Gastrocnemius medialis (tissue), 4 donors: ENCODE measurements at regions of chr15 and their contacts with region 1.

Region 1: GRCh38 chr15:94324117-94324826 is 92.9 kb downstream of the MCTP2 start:
- DNase-seq: peak in 1 of 2 donors; percentile 17
- ATAC-seq: peak; percentile 77 to 96
- H3K4me3 ChIP-seq: no peak overlapping the region
- H3K27ac ChIP-seq: no peak overlapping the region
- H3K4me1 ChIP-seq: no peaks in the 10 kb centered on the region
- H3K27me3 ChIP-seq: no peaks in the 10 kb centered on the region
- CTCF ChIP-seq: peak; percentile 42 to 86 (median 69)
- POLR2A ChIP-seq: no peak

Region 2: GRCh38 chr15:93035953-93036800 is 1288.1 kb before region 1 on chr15:
- in situ Hi-C with region 1: loop called in 1 of 4 experiments (anchors 25 kb)
- intact Hi-C with region 1: loop called (anchors 5 kb)
- DNase-seq: peak in 1 of 2 donors; percentile 51
- ATAC-seq: peak; percentile 24 to 35
- H3K4me3 ChIP-seq: no peak overlapping the region
- H3K27ac ChIP-seq: peak overlapping the region in 1 of 4 donors; percentile 68
- H3K4me1 ChIP-seq: peaks cover 10 to 18% of the 10 kb centered on the region in 2 donors
- H3K27me3 ChIP-seq: no peaks in the 10 kb centered on the region
- CTCF ChIP-seq: peak; percentile 15 to 66 (median 60)
- POLR2A ChIP-seq: no peak

Region 3: DNA sequence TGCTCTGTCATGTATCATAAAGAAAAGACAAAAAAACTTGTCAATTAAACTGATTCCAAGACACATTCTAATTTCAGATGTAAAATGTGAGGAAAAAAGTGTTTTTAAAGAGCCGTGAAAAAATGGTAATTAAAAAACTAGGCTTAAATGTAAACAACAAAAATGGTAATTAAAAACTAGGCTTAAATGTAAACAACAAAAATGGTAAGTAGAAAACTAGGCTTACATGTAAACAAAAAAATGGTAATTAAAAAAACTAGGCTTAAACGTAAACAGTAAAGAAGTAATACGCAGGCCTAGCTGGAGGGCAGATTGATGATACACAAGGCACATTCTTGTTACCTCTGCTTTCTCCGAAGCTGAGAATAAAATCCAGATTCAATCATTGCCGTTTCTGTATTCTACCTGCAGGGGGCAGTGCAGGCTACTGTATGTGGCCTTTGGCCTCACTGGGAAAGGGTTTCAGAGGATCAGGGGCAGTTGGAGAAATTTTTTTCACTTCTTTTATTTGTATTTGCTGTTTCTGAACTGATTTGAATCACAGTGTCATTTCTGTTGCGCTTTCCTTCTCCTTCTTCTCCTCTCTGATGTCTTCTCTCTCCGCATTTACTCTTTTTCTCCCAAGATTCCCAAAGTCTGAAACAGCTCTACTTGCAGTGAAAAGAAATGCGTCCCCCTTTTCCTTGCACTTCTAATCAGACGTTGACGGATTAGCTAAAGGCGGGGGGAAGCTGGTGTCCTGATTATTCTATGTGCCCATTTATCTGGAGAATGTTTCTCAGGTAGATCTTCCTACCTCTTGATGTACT is 160.1 kb before region 1 on chr15:
- in situ Hi-C with region 1: loop called in 2 of 4 experiments (anchors 5 to 10 kb)
- intact Hi-C with region 1: loop called (anchors 2 kb)
- DNase-seq: no peak
- ATAC-seq: no peak
- H3K4me3 ChIP-seq: no peak overlapping the region
- H3K27ac ChIP-seq: no peak overlapping the region
- H3K4me1 ChIP-seq: no peaks in the 10 kb centered on the region
- H3K27me3 ChIP-seq: no peaks in the 10 kb centered on the region
- CTCF ChIP-seq: peak; percentile 30 to 58 (median 43)
- POLR2A ChIP-seq: no peak